Upper lobe of right lung (tissue), 1 donor: ENCODE measurements at regions of chr12 and their contacts with region 1.

Region 1: GRCh38 chr12:124321040-124321481 is 26.2 kb downstream of the RFLNA start:
- DNase-seq: peak; percentile 84
- ATAC-seq: peak; percentile 85
- H3K4me3 ChIP-seq: no peak overlapping the region
- H3K27ac ChIP-seq: no peak overlapping the region
- H3K4me1 ChIP-seq: no peaks in the 10 kb centered on the region
- H3K27me3 ChIP-seq: no peaks in the 10 kb centered on the region
- CTCF ChIP-seq: peak; percentile 94

Region 2: DNA sequence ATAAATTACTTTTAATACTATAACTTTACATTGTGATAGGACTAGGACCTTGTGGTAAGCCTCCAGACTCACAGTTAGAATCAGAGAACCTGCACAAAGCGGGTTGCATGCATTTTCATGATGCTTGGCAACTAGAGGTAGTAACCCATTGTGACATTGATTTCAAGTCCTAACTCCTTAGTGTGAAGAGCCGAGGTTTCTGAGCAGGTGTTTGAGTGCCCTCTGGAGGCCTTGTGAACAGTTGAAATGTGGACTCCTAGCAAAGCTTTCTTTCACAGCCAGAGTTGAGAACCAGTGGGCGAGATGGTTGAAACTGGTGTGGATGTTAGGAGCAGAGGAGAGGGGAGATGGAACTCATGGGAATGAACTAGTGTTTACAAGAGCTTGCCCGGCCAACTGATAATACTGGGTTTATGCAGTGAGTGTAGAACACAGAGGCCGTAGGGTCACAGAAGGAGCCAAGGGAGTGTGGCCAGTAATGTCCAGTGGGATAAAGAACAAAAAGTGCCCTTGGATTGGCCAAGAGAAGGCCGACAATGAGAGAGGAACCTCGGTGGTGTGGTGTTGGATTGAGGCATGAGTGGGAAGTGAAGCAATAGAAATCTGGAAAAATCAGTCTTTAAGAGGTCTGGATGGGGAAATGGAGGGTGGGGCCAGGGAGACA is 337.1 kb before region 1 on chr12:
- intact Hi-C with region 1: no loop called
- DNase-seq: no peak
- ATAC-seq: peak; percentile 88
- H3K4me3 ChIP-seq: no peak overlapping the region
- H3K27ac ChIP-seq: no peak overlapping the region
- H3K4me1 ChIP-seq: peaks cover 27% of the 10 kb centered on the region
- H3K27me3 ChIP-seq: no peaks in the 10 kb centered on the region
- CTCF ChIP-seq: peak; percentile 69

Region 3: DNA sequence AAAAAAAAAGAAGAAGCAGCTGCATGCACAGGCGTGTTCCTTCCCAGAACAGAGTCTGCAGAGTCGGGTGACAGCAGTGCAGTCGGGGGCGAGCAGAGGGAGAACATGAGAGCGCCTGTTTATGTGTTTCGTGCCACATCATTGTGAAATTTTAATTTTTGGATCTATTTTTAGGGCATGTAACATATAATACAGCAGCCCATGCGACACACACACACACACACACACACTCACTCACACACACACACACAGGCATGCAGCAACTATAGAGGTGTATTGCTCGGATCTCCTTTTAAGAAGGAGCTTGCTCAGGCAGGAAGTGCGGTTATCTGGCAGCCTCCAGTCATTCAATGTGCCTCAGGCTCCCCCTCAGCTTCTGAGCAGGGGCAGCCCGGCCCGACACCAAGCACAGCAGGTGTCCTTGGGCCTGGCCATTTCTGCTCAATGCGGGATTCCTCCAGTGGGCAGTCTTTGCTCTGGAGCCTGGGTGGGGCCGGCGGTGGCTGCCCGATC is 276.2 kb before region 1 on chr12:
- intact Hi-C with region 1: loop called (anchors 10 kb)
- DNase-seq: no peak
- ATAC-seq: peak; percentile 30
- H3K4me3 ChIP-seq: no peak overlapping the region
- H3K27ac ChIP-seq: no peak overlapping the region
- H3K4me1 ChIP-seq: no peaks in the 10 kb centered on the region
- H3K27me3 ChIP-seq: no peaks in the 10 kb centered on the region
- CTCF ChIP-seq: no peak